ENCODE measurements at regions of chr20 and their contacts with region 1.

Region 1: DNA sequence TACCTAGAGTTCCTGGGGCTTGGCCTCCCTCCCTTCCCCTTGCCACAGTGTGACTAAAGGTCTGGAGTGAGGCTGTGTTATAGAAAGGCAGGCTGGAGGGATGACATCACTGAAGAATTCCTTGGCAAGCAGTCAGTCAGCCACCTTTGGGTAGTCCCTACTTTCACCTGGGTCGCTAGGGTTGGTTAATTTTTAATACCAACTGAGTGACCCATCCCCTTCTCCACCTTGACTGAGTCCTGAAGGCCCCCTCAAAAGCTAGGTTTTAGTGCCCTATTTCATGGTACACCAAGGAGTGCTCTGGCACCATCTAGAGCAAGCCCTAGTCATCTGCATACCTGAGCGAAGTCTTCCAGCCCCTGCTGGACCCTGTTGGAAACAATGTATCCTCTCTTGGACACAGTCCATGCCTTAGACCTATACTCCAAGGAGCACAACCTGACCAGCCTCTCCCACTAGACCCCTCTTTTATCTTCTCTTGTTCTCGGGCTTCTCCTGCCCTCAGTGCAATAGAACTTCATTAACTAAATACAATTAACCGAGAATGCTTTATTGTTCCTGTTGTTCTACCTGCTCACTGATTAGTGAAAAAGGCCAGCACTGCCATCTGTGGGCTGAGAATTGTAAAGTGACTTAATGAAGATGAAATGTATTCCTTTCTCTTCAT is 44.6 kb downstream of the RIN2 start:
- DNase-seq: peak; percentile 59 to 68
- H3K4me3 ChIP-seq: no peak overlapping the region
- H3K27ac ChIP-seq: peak overlapping the region; percentile 33; the same call in 1 of the 2 replicates
- H3K4me1 ChIP-seq: peaks cover 17% of the 10 kb centered on the region
- H3K27me3 ChIP-seq: no peaks in the 10 kb centered on the region
- CTCF ChIP-seq: peak; percentile 71

Region 2: GRCh38 chr20:19628570-19629169 is 174.0 kb before region 1 on chr20:
- CTCF ChIA-PET with region 1: interaction called, 4 read pairs
- POLR2A ChIA-PET with region 1: no interaction called
- intact Hi-C with region 1: loop called (anchors 2 kb)
- DNase-seq: peak; percentile 54 to 61
- H3K4me3 ChIP-seq: no peak overlapping the region
- H3K27ac ChIP-seq: no peak overlapping the region
- H3K4me1 ChIP-seq: no peaks in the 10 kb centered on the region
- H3K27me3 ChIP-seq: peaks cover 27% of the 10 kb centered on the region
- CTCF ChIP-seq: peak; percentile 82

Region 3: DNA sequence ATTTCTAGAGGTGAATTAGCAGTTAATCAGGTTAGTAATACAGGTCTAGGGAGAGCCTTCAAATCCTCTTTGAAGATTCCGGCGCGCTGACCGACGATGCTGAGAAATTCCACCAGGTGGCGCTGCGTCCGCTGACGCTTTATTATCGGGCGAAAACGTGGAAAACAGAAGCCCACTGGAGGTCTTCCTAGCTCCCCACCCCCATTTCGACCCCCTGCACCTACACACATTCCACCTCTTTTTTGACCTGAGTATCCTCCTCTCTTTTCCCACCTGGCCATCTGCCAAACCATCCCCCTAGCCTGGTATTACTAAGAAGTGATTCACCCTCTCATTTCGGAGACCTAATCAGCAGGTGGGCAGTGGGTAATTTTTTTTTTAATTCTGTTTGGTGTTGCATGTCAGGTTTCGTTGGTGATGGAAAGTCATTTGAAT is 109.9 kb before region 1 on chr20:
- CTCF ChIA-PET with region 1: no interaction called
- POLR2A ChIA-PET with region 1: no interaction called
- intact Hi-C with region 1: loop called (anchors 1 kb)
- DNase-seq: peak; percentile 70 to 72
- H3K4me3 ChIP-seq: peak overlapping the region; percentile 34; the same call in 1 of the 2 replicates
- H3K27ac ChIP-seq: peak overlapping the region; percentile 45
- H3K4me1 ChIP-seq: peaks cover 10% of the 10 kb centered on the region
- H3K27me3 ChIP-seq: no peaks in the 10 kb centered on the region
- CTCF ChIP-seq: peak; percentile 98

Region 4: DNA sequence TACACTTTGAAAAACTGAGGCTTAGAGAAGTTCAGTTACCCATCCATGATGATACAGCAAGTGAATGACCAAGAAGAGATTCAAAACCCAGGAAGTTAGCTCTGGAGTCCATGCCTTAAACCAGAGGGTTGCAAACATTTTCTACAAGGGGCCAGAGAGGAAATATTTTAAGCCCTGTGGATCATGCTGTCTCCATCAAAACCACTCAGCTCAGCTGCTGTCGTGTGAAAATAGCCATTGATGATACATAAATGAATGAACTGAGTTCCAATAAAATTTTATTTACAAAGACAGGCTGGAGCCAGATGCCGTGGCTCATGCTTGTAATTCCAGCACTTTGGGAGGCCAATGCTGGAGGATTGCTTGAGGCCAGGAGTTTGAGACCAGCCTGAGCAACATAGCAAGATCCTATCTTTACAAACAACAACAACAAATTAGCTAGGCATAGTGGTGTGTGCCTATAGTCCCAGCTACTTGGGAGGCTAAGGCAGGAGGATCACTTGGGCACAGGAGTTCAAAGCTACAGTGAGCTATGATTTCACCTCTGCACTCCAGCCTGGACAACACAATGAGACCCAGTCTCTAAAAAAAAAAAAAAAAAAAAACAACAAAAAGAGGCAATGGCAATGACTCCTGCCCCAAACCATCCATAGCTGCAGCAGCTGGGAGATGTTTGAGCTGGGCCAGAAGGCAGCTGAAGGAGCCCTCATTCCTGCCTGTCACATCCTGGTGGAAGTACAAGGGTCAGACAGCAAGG is 88.6 kb before region 1 on chr20:
- CTCF ChIA-PET with region 1: interaction called, 12 read pairs
- POLR2A ChIA-PET with region 1: no interaction called
- intact Hi-C with region 1: no loop called
- DNase-seq: no peak
- H3K4me3 ChIP-seq: no peak overlapping the region
- H3K27ac ChIP-seq: no peak overlapping the region
- H3K4me1 ChIP-seq: no peaks in the 10 kb centered on the region
- H3K27me3 ChIP-seq: peaks cover 3% of the 10 kb centered on the region; the same call in 1 of the 2 replicates
- CTCF ChIP-seq: no peak

Region 5: GRCh38 chr20:19735446-19735845 is 67.2 kb before region 1 on chr20:
- CTCF ChIA-PET with region 1: interaction called, 11 read pairs
- POLR2A ChIA-PET with region 1: no interaction called
- intact Hi-C with region 1: no loop called
- DNase-seq: peak; percentile 79 to 90
- H3K4me3 ChIP-seq: no peak overlapping the region
- H3K27ac ChIP-seq: peak overlapping the region; percentile 100
- H3K4me1 ChIP-seq: peaks cover 49% of the 10 kb centered on the region
- H3K27me3 ChIP-seq: no peaks in the 10 kb centered on the region
- CTCF ChIP-seq: no peak

Region 6: DNA sequence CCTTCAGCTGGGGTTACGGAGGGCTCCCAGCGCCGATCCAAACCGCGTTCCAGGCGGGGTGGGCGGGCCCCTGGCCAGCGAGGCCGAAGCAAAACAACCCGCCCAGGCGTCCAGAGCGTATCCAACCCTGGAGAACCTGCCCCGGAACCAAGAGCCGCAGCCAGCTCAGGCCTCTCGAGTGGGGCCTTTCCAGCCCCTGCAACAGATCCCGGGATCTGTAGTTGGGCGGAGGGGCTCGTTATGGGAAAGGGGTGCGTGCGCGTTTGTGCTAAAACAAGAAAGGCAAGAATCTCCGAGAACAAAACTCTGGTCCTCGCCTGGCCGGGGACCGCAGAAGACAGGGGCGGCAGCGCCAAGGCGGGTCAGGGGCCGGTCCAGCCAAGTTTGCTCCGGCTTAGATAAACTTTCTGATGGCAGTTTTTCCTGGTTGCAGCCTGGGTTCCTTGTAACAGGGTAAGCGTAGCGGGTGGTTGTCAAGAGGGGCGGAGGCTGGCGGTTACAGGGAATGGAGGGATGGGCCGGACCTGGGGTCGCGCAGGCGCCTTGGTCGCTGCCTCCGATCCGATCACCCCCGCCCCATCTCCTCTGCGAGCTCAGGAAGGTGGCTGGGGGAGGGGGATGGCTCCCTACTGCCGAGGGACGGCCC is 45.0 kb before region 1 on chr20:
- CTCF ChIA-PET with region 1: no interaction called
- POLR2A ChIA-PET with region 1: no interaction called
- intact Hi-C with region 1: loop called (anchors 5 kb)
- DNase-seq: peak; percentile 71 to 79
- H3K4me3 ChIP-seq: peak overlapping the region; percentile 82
- H3K27ac ChIP-seq: peak overlapping the region; percentile 99
- H3K4me1 ChIP-seq: peaks cover 38% of the 10 kb centered on the region
- H3K27me3 ChIP-seq: no peaks in the 10 kb centered on the region
- CTCF ChIP-seq: no peak